Motor neuron (in vitro differentiated cells): ENCODE measurements at regions of chr15 and their contacts with region 1.

Region 1: DNA sequence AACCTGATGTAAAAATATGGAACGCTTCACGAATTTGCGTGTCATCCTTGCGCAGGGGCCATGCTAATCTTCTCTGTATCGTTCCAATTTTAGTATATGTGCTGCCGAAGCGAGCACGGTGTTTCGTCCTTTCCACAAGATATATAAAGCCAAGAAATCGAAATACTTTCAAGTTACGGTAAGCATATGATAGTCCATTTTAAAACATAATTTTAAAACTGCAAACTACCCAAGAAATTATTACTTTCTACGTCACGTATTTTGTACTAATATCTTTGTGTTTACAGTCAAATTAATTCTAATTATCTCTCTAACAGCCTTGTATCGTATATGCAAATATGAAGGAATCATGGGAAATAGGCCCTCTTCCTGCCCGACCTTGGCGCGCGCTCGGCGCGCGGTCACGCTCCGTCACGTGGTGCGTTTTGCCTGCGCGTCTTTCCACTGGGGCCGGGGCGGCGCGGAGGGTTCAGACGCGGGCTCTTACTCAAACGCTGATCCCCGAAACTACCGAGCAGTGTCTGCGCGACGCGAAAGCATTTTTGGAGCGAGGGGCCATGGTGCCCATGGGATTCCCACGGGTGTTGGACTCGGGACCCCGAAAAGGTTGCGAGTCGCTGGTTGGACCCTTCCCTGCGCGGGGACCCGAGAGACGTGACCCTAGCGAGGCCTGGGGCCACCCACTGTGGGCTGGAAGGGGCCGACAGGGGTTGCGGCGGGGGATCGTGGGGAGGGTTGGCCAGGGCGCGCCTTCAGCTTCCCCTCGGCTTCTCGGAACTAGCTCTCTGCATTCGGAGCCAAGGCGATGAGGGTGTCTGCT is at the start of gene RNU6-1:
- ATAC-seq: peak; percentile 70 to 87 (median 80)
- H3K4me3 ChIP-seq: peak within 1 kb of the TSS; percentile 67 to 94 (median 81)
- H3K27ac ChIP-seq: peak within 1 kb of the TSS; percentile 87 to 92
- H3K4me1 ChIP-seq: peaks cover 12 to 15% of the 10 kb centered on the region in 2 donors
- total RNA-seq, gene RNU6-1: under 0.01 TPM in 1 of 8 experiments, not detected in the others

Region 2: DNA sequence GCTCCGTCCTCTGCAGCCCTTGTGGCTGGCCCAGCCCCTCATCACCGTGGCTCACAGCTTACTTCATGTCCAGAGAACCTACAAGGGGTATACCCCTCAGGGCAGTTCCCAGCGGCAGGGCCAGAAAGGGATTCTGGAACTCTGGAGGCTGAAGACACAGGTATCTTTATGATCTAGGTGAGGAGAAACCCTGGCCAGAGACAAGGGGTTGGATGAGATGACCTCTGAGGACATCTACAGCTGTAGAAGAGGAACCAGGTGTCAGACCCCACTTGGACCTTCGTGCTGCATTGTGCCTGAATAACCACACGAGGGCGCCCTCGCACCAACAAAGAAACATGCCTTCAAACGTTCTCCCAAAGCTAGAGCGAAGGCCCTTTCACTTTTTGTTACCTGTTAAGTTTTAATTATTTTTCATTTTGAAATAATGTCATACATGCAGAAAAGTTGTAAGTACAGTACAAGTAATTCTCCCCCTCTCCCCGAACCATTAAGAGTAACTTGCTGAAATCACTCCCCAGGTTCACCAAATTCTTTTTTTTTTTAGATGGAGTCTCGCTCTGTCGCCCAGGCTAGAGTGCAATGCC is 893.5 kb before region 1 on chr15:
- in situ Hi-C with region 1: loop called in 5 of 9 experiments (anchors 10 to 25 kb)
- ATAC-seq: peak; percentile 60 to 90 (median 70)
- H3K4me3 ChIP-seq: no peak overlapping the region
- H3K27ac ChIP-seq: no peak overlapping the region
- H3K4me1 ChIP-seq: no peaks in the 10 kb centered on the region

Region 3: GRCh38 chr15:67456677-67457529 is 383.2 kb before region 1 on chr15:
- in situ Hi-C with region 1: loop called in 5 of 9 experiments (anchors 25 kb)
- ATAC-seq: peak; percentile 74 to 100 (median 86)
- H3K4me3 ChIP-seq: no peak overlapping the region
- H3K27ac ChIP-seq: no peak overlapping the region
- H3K4me1 ChIP-seq: no peaks in the 10 kb centered on the region

Region 4: GRCh38 chr15:67542420-67543347 is 297.5 kb before region 1 on chr15 and contains the start of gene MAP2K5:
- in situ Hi-C with region 1: loop called in 1 of 9 experiments (anchors 25 kb)
- ATAC-seq: peak; percentile 79 to 91 (median 83)
- H3K4me3 ChIP-seq: peak within 1 kb of the TSS; percentile 58 to 93 (median 75)
- H3K27ac ChIP-seq: peak within 1 kb of the TSS; percentile 36 to 71
- H3K4me1 ChIP-seq: peaks cover 8 to 11% of the 10 kb centered on the region in 2 donors
- total RNA-seq, gene MAP2K5: 5.3 to 22.6 (median 10.6) TPM

Region 5: GRCh38 chr15:67720556-67721175 is 119.5 kb before region 1 on chr15:
- in situ Hi-C with region 1: no loop called
- ATAC-seq: peak in 5 of 8 experiments; percentile 54 to 92 (median 75)
- H3K4me3 ChIP-seq: no peak overlapping the region
- H3K27ac ChIP-seq: no peak overlapping the region
- H3K4me1 ChIP-seq: peaks cover 0 to 15% of the 10 kb centered on the region in 2 donors

Region 6: DNA sequence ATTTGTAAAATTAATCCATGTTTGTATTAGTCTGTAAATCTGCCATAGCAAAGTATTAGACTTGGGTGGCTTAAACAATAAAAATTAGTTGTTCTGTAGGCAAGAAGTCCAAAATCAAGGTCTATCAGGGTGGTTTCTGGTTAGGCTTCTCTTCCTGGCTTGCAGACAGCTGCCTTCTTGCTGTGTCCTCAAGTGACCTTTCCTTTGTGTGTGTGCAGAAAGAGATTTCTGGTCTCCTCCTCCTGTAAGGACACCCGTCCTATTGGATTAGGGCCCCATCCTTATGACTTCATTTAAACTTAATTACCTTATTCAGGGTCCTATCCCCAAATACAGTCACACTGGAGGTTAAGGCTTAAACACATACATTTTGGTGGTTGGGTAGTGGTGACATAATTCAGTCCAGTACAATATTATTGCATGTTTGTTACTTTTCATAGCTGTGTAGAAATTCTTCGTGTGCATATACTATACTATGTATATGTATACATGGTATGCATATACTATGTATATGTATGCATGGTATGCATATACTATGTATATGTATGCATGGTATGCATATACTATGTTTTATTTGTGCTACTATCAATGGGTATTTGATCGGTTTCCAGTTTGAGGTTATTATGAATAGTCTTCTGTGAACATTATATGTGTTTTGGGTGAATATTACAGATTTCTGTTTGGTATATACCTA is 57.7 kb after region 1 on chr15:
- in situ Hi-C with region 1: no loop called
- ATAC-seq: peak in 2 of 8 experiments; percentile 50 to 99
- H3K4me3 ChIP-seq: no peak overlapping the region
- H3K27ac ChIP-seq: no peak overlapping the region
- H3K4me1 ChIP-seq: peaks cover 5 to 8% of the 10 kb centered on the region in 2 donors